ENCODE measurements at regions of chr10 and their contacts with region 1.

Region 1: GRCh38 chr10:115674496-115674895 is 581.3 kb downstream of the ATRNL1 start:
- DNase-seq: no peak
- ATAC-seq: no peak
- H3K4me3 ChIP-seq: no peak overlapping the region
- H3K27ac ChIP-seq: no peak overlapping the region
- H3K4me1 ChIP-seq: peaks cover 0 to 6% (median 0%) of the 10 kb centered on the region in 9 donors
- H3K27me3 ChIP-seq: no peaks in the 10 kb centered on the region
- CTCF ChIP-seq: no peak

Region 2: DNA sequence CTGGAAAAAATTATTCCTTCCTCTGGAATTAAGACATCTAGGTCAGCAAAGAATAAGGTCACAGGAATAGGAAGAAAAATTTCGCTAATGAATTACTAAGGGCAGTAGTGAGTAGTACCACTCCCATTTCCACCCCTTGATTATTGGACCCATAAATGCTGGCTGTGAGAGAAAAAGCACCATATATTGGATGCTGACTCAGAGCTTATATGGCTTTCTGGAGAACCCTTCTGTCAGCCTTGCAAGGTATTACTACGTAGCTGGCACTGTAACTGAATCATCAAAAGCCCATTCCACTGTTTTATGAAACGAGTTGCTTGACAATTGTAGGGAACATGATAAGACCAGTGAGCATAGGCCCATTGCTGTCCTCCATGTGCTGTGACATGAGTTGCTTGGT is 402.0 kb before region 1 on chr10:
- intact Hi-C with region 1: no loop called
- DNase-seq: no peak
- ATAC-seq: no peak
- H3K4me3 ChIP-seq: no peak overlapping the region
- H3K27ac ChIP-seq: no peak overlapping the region
- H3K4me1 ChIP-seq: no peaks in the 10 kb centered on the region
- H3K27me3 ChIP-seq: no peaks in the 10 kb centered on the region
- CTCF ChIP-seq: no peak

Region 3: DNA sequence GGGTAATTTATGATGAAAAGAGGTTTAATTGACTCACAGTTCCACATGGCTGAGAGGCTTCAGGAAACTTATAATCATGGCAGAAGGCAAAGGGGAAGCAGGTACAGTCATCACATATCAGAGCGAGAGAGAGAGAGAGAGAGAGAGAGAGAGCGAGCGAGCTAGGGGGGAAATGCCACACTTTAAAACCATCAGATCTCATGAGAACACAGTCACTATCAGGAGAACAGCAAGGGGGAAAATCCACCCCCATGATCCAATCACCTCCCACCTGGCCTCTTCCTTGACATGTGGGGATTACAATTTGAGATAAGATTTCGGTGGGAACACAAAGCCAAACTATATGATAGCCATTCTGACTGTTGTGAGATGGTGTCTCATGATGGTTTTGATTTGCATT is 22.3 kb after region 1 on chr10:
- intact Hi-C with region 1: loop called in 1 of 10 experiments (anchors 1 kb)
- DNase-seq: no peak
- ATAC-seq: no peak
- H3K4me3 ChIP-seq: no peak overlapping the region
- H3K27ac ChIP-seq: no peak overlapping the region
- H3K4me1 ChIP-seq: no peaks in the 10 kb centered on the region
- H3K27me3 ChIP-seq: no peaks in the 10 kb centered on the region
- CTCF ChIP-seq: no peak

Measured in heart right ventricle (tissue), 16 donors.